Endothelial cell of umbilical vein (primary cell): ENCODE measurements at regions of chr12 and their contacts with region 1.

Region 1: GRCh38 chr12:111812881-111813741 is 28.9 kb upstream of the MAPKAPK5 start:
- DNase-seq: peak; percentile 86
- H3K4me3 ChIP-seq: no peak overlapping the region
- H3K27ac ChIP-seq: no peak overlapping the region
- H3K4me1 ChIP-seq: no peaks in the 10 kb centered on the region
- H3K27me3 ChIP-seq: peaks cover 2 to 3% of the 10 kb centered on the region in 2 experiments
- CTCF ChIP-seq: peak; percentile 76 to 78
- POLR2A ChIP-seq: no peak

Region 2: GRCh38 chr12:111673503-111673902 is 139.6 kb before region 1 on chr12:
- CTCF ChIA-PET with region 1: interaction called, 12 read pairs
- POLR2A ChIA-PET with region 1: no interaction called
- dilution Hi-C with region 1: loop called (anchors 25 kb)
- intact Hi-C with region 1: no loop called
- DNase-seq: peak; percentile 31
- H3K4me3 ChIP-seq: no peak overlapping the region
- H3K27ac ChIP-seq: no peak overlapping the region
- H3K4me1 ChIP-seq: no peaks in the 10 kb centered on the region
- H3K27me3 ChIP-seq: no peaks in the 10 kb centered on the region
- CTCF ChIP-seq: peak; percentile 19 to 37
- POLR2A ChIP-seq: no peak

Region 3: DNA sequence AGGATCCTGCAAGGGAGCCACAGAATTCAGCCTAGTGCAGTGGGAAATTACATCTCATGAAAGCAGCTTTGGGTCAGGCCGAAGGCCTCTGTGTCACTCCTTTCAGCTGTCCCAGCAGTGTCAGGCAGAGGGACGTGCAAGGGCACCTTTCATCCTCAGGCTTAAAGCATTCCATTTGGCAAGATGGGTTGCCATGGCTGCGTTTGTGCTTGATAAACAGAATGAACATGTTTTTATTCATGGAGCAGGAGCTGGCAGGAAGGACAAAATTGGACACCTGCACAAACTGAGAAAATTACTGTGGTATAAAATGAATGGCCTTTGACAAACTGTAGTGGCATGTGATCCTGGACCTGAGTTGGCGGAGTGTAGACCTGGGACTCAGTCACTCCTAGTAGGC is 97.8 kb before region 1 on chr12:
- CTCF ChIA-PET with region 1: interaction called, 21 read pairs
- POLR2A ChIA-PET with region 1: no interaction called
- dilution Hi-C with region 1: no loop called
- intact Hi-C with region 1: no loop called
- DNase-seq: peak; percentile 23
- H3K4me3 ChIP-seq: no peak overlapping the region
- H3K27ac ChIP-seq: no peak overlapping the region
- H3K4me1 ChIP-seq: no peaks in the 10 kb centered on the region
- H3K27me3 ChIP-seq: no peaks in the 10 kb centered on the region
- CTCF ChIP-seq: no peak
- POLR2A ChIP-seq: no peak

Region 4: DNA sequence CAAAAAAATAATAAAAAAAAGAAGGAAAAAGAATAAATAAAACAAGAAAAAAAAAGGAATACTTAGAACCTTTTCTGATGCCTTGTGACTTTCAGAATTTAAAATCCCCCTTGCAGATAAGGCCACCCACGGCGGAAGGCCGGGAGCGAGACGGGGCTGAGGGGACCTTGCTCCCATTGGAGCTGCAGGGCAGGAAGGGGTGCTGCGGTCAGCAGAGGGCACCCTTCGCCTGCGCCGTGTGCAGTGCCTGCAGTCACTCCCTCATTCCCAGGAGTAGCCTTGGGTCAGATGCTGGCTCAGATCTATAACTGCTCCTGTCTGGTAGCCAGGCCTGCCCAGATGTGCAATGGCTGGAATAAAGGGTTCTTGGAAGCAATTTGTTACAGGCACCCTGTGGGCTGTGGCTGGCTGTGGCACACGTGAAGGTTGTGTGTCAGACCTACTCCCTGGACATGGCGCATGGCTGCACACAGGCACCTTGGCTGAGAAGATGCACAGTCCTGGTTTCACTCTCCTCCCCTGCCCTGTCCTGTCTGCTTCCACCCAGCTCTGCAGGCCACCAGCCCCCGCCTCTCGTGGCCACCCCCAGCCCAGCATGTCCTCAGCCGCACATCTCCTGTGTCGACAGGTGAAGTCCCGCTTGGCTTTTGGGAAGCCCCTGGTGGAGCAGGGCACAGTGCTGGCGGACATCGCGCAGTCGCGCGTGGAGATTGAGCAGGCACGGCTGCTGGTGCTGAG is 59.8 kb before region 1 on chr12:
- CTCF ChIA-PET with region 1: interaction called, 262 read pairs
- POLR2A ChIA-PET with region 1: interaction called, 7 read pairs
- dilution Hi-C with region 1: no loop called
- intact Hi-C with region 1: loop called (anchors 1 kb)
- DNase-seq: peak; percentile 59
- H3K4me3 ChIP-seq: no peak overlapping the region
- H3K27ac ChIP-seq: no peak overlapping the region
- H3K4me1 ChIP-seq: peaks cover 11% of the 10 kb centered on the region
- H3K27me3 ChIP-seq: no peaks in the 10 kb centered on the region
- CTCF ChIP-seq: peak; percentile 75 to 85
- POLR2A ChIP-seq: no peak

Region 5: DNA sequence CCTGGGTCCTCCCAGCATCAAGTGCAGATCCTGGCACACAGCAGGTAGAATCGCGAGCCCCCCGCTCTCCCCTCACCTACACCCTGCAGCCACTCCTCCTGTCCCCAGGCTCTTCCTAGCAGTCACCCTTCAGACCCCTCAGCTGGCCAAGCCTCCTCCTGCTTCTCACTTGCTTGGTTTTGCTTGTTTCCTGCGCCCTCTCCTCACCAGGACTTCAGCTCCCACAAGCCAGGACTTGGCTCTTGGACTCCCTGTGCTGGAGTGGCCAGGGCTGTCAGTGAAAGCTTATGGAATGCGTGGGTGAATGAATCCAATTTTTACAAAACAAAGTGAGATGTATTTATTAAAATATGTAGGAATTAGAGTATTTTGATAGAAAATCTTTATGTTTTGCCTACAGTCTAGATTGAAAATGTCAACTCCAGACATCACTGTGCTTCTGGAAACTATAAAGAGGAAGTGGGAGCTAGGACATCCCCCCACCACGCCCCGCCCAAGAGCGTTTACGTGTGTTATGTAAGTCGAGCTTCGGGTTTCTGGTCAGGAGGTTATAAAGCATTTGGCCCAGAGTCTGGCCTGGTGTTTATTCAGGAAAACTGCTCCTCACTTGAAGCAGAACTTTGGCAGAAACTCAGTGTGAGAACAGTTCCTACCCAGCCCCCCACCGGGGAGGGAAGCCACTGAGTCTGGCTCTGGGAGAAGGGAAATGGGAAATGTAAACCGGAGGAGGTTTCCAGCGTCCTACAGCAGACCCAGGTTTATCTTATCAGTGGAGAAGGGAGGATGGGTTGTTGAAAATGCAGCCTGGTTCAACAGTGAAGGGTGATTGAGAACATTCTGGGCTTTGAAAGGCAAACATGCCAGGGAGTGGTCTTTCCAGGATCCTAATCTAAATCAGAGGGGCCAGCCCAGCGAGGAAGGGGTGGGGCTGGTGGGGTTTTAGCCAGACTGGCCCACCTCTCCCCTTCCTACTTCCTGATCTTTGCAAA is 37.6 kb before region 1 on chr12:
- CTCF ChIA-PET with region 1: interaction called, 23 read pairs
- POLR2A ChIA-PET with region 1: no interaction called
- dilution Hi-C with region 1: no loop called
- intact Hi-C with region 1: no loop called
- DNase-seq: peak; percentile 98
- H3K4me3 ChIP-seq: peak overlapping the region in 1 of 3 experiments; percentile 9
- H3K27ac ChIP-seq: peak overlapping the region; percentile 54
- H3K4me1 ChIP-seq: peaks cover 16% of the 10 kb centered on the region
- H3K27me3 ChIP-seq: no peaks in the 10 kb centered on the region
- CTCF ChIP-seq: no peak
- POLR2A ChIP-seq: peak; percentile 44

Region 6: DNA sequence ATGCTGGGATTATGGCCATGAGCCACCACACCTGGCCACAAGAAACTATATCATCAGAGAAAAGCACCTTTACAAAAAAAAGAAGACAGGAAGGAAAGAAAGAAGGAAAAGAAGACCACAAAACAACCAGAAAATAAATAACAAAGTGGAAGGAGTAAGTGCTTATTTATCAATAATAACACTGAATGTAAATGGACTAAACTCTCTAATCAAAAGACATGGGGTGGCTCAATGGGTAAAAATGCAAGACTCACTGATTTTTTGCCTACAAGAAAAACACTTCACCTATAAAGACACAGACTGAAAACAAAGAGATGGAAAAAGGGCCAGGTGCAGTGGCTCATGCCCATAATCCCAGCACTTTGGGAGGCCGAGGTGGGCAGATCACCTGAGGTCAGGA is 94.6 kb after region 1 on chr12:
- CTCF ChIA-PET with region 1: no interaction called
- POLR2A ChIA-PET with region 1: no interaction called
- dilution Hi-C with region 1: no loop called
- intact Hi-C with region 1: no loop called
- DNase-seq: no peak
- H3K4me3 ChIP-seq: no peak overlapping the region
- H3K27ac ChIP-seq: no peak overlapping the region
- H3K4me1 ChIP-seq: no peaks in the 10 kb centered on the region
- H3K27me3 ChIP-seq: no peaks in the 10 kb centered on the region
- CTCF ChIP-seq: no peak
- POLR2A ChIP-seq: no peak

Region 7: GRCh38 chr12:112198120-112198733 is 385.1 kb after region 1 on chr12:
- CTCF ChIA-PET with region 1: no interaction called
- POLR2A ChIA-PET with region 1: no interaction called
- dilution Hi-C with region 1: no loop called
- intact Hi-C with region 1: no loop called
- DNase-seq: peak; percentile 59
- H3K4me3 ChIP-seq: no peak overlapping the region
- H3K27ac ChIP-seq: no peak overlapping the region
- H3K4me1 ChIP-seq: no peaks in the 10 kb centered on the region
- H3K27me3 ChIP-seq: no peaks in the 10 kb centered on the region
- CTCF ChIP-seq: peak; percentile 47 to 72
- POLR2A ChIP-seq: no peak